ENCODE measurements at regions of chr9 and their contacts with region 1.

Region 1: GRCh38 chr9:96566498-96567207 is 53.0 kb downstream of the CDC14B start:
- DNase-seq: peak; percentile 57 to 92 (median 82)
- ATAC-seq: peak; percentile 86
- H3K4me3 ChIP-seq: peak overlapping the region; percentile 76 to 88
- H3K4me3 Mint-ChIP-seq: peak overlapping the region; percentile 86
- H3K27ac ChIP-seq: peak overlapping the region; percentile 87 to 91
- H3K27ac Mint-ChIP-seq: peak overlapping the region; percentile 84
- H3K4me1 ChIP-seq: peaks cover 24% of the 10 kb centered on the region
- H3K4me1 Mint-ChIP-seq: peaks cover 27% of the 10 kb centered on the region
- H3K27me3 ChIP-seq: no peaks in the 10 kb centered on the region
- H3K27me3 Mint-ChIP-seq: peaks cover 12% of the 10 kb centered on the region
- CTCF ChIP-seq: peak; percentile 58

Region 2: GRCh38 chr9:96491079-96491879 is 75.4 kb before region 1 on chr9:
- CTCF ChIA-PET with region 1: no interaction called
- POLR2A ChIA-PET with region 1: no interaction called
- intact Hi-C with region 1: loop called in 1 of 2 experiments (anchors 10 kb)
- DNase-seq: peak in 3 of 9 experiments; percentile 11 to 49 (median 18)
- ATAC-seq: peak; percentile 69
- H3K4me3 ChIP-seq: no peak overlapping the region
- H3K4me3 Mint-ChIP-seq: peak overlapping the region; percentile 40
- H3K27ac ChIP-seq: no peak overlapping the region
- H3K27ac Mint-ChIP-seq: peak overlapping the region; percentile 55
- H3K4me1 ChIP-seq: no peaks in the 10 kb centered on the region
- H3K4me1 Mint-ChIP-seq: peaks cover 9% of the 10 kb centered on the region
- H3K27me3 ChIP-seq: no peaks in the 10 kb centered on the region
- H3K27me3 Mint-ChIP-seq: no peaks in the 10 kb centered on the region
- CTCF ChIP-seq: no peak

Region 3: GRCh38 chr9:96555567-96556386 is 10.9 kb before region 1 on chr9:
- CTCF ChIA-PET with region 1: interaction called, 7 read pairs
- POLR2A ChIA-PET with region 1: interaction called, 11 read pairs
- intact Hi-C with region 1: no loop called
- DNase-seq: no peak
- ATAC-seq: no peak
- H3K4me3 ChIP-seq: no peak overlapping the region
- H3K4me3 Mint-ChIP-seq: no peak overlapping the region
- H3K27ac ChIP-seq: no peak overlapping the region
- H3K27ac Mint-ChIP-seq: no peak overlapping the region
- H3K4me1 ChIP-seq: no peaks in the 10 kb centered on the region
- H3K4me1 Mint-ChIP-seq: peaks cover 4% of the 10 kb centered on the region
- H3K27me3 ChIP-seq: no peaks in the 10 kb centered on the region
- H3K27me3 Mint-ChIP-seq: no peaks in the 10 kb centered on the region
- CTCF ChIP-seq: no peak

Measured in CD8-positive, alpha-beta T cell (primary cell).